ENCODE measurements at regions of chr5 and their contacts with region 1.

Region 1: GRCh38 chr5:65721720-65722574 is at the starts of genes NLN and SGTB:
- DNase-seq: peak; percentile 78 to 86 (median 82)
- H3K4me3 ChIP-seq: peak within 1 kb of the TSS; percentile 57 to 64
- H3K4me3 Mint-ChIP-seq: peak within 1 kb of the TSS; percentile 88 to 98 (median 94)
- H3K27ac ChIP-seq: peak within 1 kb of the TSS; percentile 91
- H3K27ac Mint-ChIP-seq: peak within 1 kb of the TSS in 6 of 7 donors; percentile 75 to 93 (median 90)
- H3K4me1 ChIP-seq: peaks cover 46% of the 10 kb centered on the region
- H3K4me1 Mint-ChIP-seq: peaks cover 9 to 22% (median 14%) of the 10 kb centered on the region in 4 donors
- H3K27me3 ChIP-seq: no peaks in the 10 kb centered on the region
- H3K27me3 Mint-ChIP-seq: no peaks in the 10 kb centered on the region
- total RNA-seq, gene NLN: 2.3 to 2.4 TPM
- total RNA-seq, gene SGTB: 42.6 to 46.5 TPM

Region 2: DNA sequence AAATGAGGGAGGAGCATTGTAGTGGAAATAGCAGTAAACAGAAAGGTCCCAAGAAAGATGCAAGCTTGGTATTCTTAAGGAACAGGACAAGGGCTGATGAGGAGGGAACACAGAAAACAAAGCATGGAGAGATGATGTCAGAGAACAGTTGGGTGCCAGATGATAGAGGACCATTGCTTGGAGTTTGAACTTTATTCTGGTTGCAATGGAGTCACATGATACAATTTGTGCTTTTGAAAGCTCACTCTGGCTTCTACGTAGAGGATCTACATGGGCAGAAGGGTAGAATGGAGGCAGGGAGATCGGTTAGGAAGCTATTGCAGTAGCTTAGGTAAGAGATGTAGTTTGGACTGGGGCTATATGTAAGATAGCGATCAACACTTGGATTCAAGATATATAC is 39.8 kb before region 1 on chr5:
- CTCF ChIA-PET with region 1: no interaction called
- POLR2A ChIA-PET with region 1: no interaction called
- intact Hi-C with region 1: loop called (anchors 5 kb)
- DNase-seq: no peak
- H3K4me3 ChIP-seq: no peak overlapping the region
- H3K4me3 Mint-ChIP-seq: no peak overlapping the region
- H3K27ac ChIP-seq: no peak overlapping the region
- H3K27ac Mint-ChIP-seq: peak overlapping the region in 5 of 7 donors; percentile 7 to 77 (median 11)
- H3K4me1 ChIP-seq: peaks cover 9% of the 10 kb centered on the region
- H3K4me1 Mint-ChIP-seq: peaks cover 31 to 62% (median 42%) of the 10 kb centered on the region in 4 donors
- H3K27me3 ChIP-seq: no peaks in the 10 kb centered on the region
- H3K27me3 Mint-ChIP-seq: no peaks in the 10 kb centered on the region

Region 3: GRCh38 chr5:65769539-65769938 is 47.6 kb after region 1 on chr5:
- CTCF ChIA-PET with region 1: no interaction called
- POLR2A ChIA-PET with region 1: no interaction called
- intact Hi-C with region 1: no loop called
- DNase-seq: no peak
- H3K4me3 ChIP-seq: no peak overlapping the region
- H3K4me3 Mint-ChIP-seq: no peak overlapping the region
- H3K27ac ChIP-seq: no peak overlapping the region
- H3K27ac Mint-ChIP-seq: no peak overlapping the region
- H3K4me1 ChIP-seq: peaks cover 5% of the 10 kb centered on the region
- H3K4me1 Mint-ChIP-seq: peaks cover 0 to 7% (median 5%) of the 10 kb centered on the region in 4 donors
- H3K27me3 ChIP-seq: no peaks in the 10 kb centered on the region
- H3K27me3 Mint-ChIP-seq: no peaks in the 10 kb centered on the region

Measured in CD4-positive, alpha-beta memory T cell (primary cell).